ENCODE measurements at regions of chr18 and their contacts with region 1.

Region 1: GRCh38 chr18:61569176-61569892 is 236.1 kb downstream of the CDH20 start:
- DNase-seq: no peak
- ATAC-seq: no peak

Region 2: GRCh38 chr18:61531182-61531581 is 38.2 kb before region 1 on chr18:
- intact Hi-C with region 1: loop called in 1 of 2 experiments (anchors 2 kb)
- DNase-seq: no peak
- ATAC-seq: no peak

Measured in left colon (tissue), 2 donors.